ENCODE measurements at regions of chr9 and their contacts with region 1.

Region 1: GRCh38 chr9:121376214-121376830 is 6.3 kb upstream of the STOM start:
- DNase-seq: peak in 1 of 5 donors; percentile 30
- H3K4me3 ChIP-seq: no peak overlapping the region
- H3K4me3 Mint-ChIP-seq: no peak overlapping the region
- H3K27ac ChIP-seq: no peak overlapping the region
- H3K27ac Mint-ChIP-seq: no peak overlapping the region
- H3K4me1 ChIP-seq: peaks cover 3% of the 10 kb centered on the region
- H3K4me1 Mint-ChIP-seq: peaks cover 20 to 29% (median 23%) of the 10 kb centered on the region in 3 donors
- H3K27me3 ChIP-seq: no peaks in the 10 kb centered on the region
- H3K27me3 Mint-ChIP-seq: no peaks in the 10 kb centered on the region

Region 2: GRCh38 chr9:121364077-121364476 is 12.2 kb before region 1 on chr9:
- CTCF ChIA-PET with region 1: no interaction called
- POLR2A ChIA-PET with region 1: no interaction called
- DNase-seq: no peak
- H3K4me3 ChIP-seq: no peak overlapping the region
- H3K4me3 Mint-ChIP-seq: peak overlapping the region; percentile 11 to 62 (median 26)
- H3K27ac ChIP-seq: no peak overlapping the region
- H3K27ac Mint-ChIP-seq: peak overlapping the region; percentile 23 to 84 (median 63)
- H3K4me1 ChIP-seq: peaks cover 47% of the 10 kb centered on the region
- H3K4me1 Mint-ChIP-seq: peaks cover 82 to 96% (median 96%) of the 10 kb centered on the region in 3 donors
- H3K27me3 ChIP-seq: no peaks in the 10 kb centered on the region
- H3K27me3 Mint-ChIP-seq: no peaks in the 10 kb centered on the region

Region 3: DNA sequence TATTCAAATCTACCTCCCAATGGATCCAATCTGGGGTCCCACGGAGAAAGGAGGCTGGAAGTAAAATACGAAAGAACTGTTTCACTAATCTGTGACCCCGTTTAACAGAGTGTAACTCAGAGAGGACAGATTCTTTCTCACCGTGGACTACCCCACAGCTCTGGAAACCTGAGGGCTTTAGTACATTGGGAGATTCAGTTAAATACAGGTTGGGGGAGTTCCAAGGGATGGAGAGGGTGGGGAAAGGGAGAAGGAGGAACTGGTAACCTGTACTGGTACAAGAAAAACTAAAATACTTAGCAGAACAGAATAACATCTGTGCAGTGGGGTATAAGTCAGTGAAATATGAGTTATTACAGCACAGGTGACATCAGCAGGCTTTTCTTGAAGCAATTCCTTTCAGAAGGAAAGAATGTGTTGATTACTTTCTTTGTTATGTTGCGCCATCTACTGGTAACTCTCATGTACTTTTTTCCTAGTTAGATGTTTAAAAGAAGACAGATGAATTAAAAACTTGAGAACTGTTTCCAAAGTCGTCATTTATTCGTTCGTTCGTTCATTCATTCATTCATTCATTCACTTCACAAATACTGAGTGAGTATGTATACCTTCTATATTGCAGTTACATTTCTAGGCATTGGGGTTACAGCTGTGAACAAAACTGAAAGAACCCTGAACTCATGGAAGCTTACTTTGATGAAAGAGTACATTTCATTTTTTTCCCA is 23.7 kb after region 1 on chr9:
- CTCF ChIA-PET with region 1: interaction called, 15 read pairs
- POLR2A ChIA-PET with region 1: no interaction called
- DNase-seq: peak in 2 of 5 donors; percentile 49 to 51
- H3K4me3 ChIP-seq: no peak overlapping the region
- H3K4me3 Mint-ChIP-seq: no peak overlapping the region
- H3K27ac ChIP-seq: no peak overlapping the region
- H3K27ac Mint-ChIP-seq: no peak overlapping the region
- H3K4me1 ChIP-seq: no peaks in the 10 kb centered on the region
- H3K4me1 Mint-ChIP-seq: peaks cover 0 to 3% (median 0%) of the 10 kb centered on the region in 3 donors
- H3K27me3 ChIP-seq: no peaks in the 10 kb centered on the region
- H3K27me3 Mint-ChIP-seq: peaks cover 5 to 6% of the 10 kb centered on the region in 2 donors

Measured in CD8-positive, alpha-beta memory T cell (primary cell).